ENCODE measurements at regions of chr3 and their contacts with region 1.

Region 1: DNA sequence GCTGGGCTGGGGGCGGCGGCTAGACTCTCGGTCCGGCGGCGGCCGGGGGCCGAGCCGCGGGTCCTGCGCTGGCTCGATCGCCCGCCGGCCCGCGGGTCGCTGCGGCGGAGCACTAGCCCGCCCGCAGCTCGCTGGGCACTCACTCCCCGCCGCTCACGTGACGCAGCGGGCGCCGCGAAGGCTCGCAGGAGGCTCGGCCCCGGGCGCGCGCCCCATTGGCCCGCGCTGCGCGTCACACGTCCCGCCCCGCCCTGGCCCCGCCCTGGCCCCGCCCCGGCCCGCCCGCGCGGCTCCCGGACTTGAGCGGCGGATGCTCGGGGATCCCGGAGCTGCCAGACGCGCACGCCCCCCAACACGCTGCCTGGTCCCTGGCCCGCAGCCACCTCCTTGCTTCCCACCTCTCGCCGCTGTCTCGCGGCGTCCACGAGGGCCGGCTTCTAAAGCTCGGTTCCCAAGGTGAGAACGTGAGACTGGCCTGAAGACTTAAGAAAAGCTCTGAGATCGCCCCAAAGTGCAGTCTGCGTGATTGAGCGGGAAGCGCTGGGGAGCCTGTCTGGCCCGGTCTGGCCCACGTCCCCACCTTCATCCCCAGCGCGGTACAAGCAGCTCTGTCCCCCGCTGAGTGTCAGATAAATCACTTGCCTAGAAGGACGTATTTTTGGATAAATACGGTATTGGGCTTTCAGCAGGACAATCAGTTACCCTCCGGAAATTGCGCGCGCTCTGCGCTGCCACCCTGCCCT is at the start of gene KLF15:
- DNase-seq: peak; percentile 82
- H3K4me3 ChIP-seq: peak within 1 kb of the TSS; percentile 21 to 55 (median 42)
- H3K27ac ChIP-seq: no peak within 1 kb of the TSS
- H3K4me1 ChIP-seq: peaks cover 12% of the 10 kb centered on the region
- H3K27me3 ChIP-seq: peaks cover 14 to 29% of the 10 kb centered on the region in 2 experiments
- CTCF ChIP-seq: no peak
- POLR2A ChIP-seq: no peak
- total RNA-seq, gene KLF15: 1.4 and 3.0 TPM in 2 replicates

Region 2: GRCh38 chr3:126083913-126084767 is 273.3 kb before region 1 on chr3 and contains the start of gene SLC41A3:
- CTCF ChIA-PET with region 1: no interaction called
- POLR2A ChIA-PET with region 1: no interaction called
- dilution Hi-C with region 1: no loop called
- intact Hi-C with region 1: loop called (anchors 5 kb)
- DNase-seq: peak; percentile 74
- H3K4me3 ChIP-seq: peak within 1 kb of the TSS; percentile 65 to 82 (median 71)
- H3K27ac ChIP-seq: peak within 1 kb of the TSS; percentile 41
- H3K4me1 ChIP-seq: peaks cover 5% of the 10 kb centered on the region
- H3K27me3 ChIP-seq: peaks cover 2 to 3% of the 10 kb centered on the region in 2 experiments
- CTCF ChIP-seq: peak; percentile 18 to 58
- POLR2A ChIP-seq: no peak
- total RNA-seq, gene SLC41A3: 47.1 and 52.5 TPM in 2 replicates

Region 3: DNA sequence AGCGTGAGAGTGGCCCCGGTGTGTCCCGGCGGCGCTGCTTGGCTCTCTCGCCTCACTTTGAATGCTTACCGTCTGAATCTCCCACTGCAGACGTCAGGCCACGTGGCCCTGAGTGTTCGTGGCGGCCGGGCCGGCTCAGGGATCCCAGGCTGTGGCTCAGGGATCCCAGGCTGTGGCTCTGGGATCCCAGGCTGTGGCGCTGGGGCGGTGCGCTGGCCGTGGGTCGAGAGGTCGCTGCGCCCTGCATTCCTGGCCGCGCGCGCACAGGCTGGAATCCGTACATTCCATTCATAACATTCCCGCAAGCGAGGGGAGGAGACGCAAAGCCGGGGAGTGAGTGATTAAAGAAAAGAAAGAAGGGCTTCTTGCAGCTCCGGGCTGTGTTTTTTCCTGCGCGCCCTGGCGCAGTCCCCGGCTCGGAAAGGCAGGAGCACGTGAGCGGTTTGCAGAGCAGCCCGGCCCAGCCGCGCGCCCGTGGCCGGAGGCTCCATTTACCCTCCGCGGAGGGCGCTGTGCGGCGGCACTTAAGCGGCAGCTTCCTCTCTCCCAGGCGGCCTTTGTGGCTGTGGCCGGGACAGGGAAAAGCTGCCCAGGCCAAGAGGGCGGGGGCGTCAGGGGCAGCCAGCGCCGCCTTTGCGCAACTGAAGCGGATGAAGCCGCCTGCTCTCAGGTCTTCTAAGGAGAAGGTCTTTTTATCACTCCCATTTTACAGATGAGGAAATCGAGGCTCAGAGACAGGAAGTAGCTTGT is 90.1 kb before region 1 on chr3:
- CTCF ChIA-PET with region 1: no interaction called
- POLR2A ChIA-PET with region 1: no interaction called
- dilution Hi-C with region 1: no loop called
- intact Hi-C with region 1: loop called (anchors 1 kb)
- DNase-seq: peak; percentile 89
- H3K4me3 ChIP-seq: peak overlapping the region in 1 of 3 experiments; percentile 14
- H3K27ac ChIP-seq: peak overlapping the region; percentile 22
- H3K4me1 ChIP-seq: peaks cover 15% of the 10 kb centered on the region
- H3K27me3 ChIP-seq: no peaks in the 10 kb centered on the region
- CTCF ChIP-seq: peak; percentile 6 to 38
- POLR2A ChIP-seq: no peak

Region 4: GRCh38 chr3:126287536-126288241 is 69.8 kb before region 1 on chr3:
- CTCF ChIA-PET with region 1: no interaction called
- POLR2A ChIA-PET with region 1: no interaction called
- dilution Hi-C with region 1: no loop called
- intact Hi-C with region 1: loop called (anchors 1 kb)
- DNase-seq: peak; percentile 46
- H3K4me3 ChIP-seq: peak overlapping the region; percentile 8 to 34 (median 28)
- H3K27ac ChIP-seq: no peak overlapping the region
- H3K4me1 ChIP-seq: peaks cover 26% of the 10 kb centered on the region
- H3K27me3 ChIP-seq: peaks cover 2 to 4% of the 10 kb centered on the region in 2 experiments
- CTCF ChIP-seq: no peak
- POLR2A ChIP-seq: peak; percentile 12

Region 5: DNA sequence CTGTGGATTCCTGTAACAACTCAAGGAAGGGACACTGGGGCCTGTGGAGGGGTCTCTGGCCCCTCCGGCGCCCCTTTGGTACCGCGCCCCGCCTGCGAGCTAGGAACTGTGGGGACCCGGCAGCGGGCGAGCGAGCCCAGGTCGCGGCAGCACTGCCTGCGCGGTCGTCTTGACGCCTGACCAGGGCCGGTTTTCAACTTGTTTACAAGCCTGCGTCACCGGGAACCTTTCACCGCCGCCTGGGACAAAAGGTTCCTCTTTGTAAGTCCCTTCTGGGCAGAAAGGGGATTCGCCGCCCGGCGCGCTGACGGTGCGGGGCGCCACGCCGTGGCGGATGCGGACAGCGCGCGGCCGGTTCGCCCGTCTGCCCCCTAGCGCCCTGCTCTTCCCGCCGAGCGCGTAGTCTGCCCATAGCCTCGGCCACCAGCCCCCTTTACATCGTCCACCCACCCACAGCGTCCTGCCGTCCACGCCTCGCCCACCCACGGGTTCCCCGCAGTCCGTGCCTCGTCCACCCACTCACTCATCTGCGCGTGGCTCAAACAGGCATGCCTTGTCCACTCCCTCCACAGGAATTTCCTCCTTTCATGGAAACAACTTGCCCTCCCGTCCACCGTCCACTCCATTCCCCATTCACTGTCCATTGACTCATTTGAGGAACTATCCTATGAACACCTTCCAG is 31.8 kb after region 1 on chr3:
- CTCF ChIA-PET with region 1: interaction called, 4 read pairs
- POLR2A ChIA-PET with region 1: no interaction called
- dilution Hi-C with region 1: no loop called
- intact Hi-C with region 1: loop called (anchors 1 kb)
- DNase-seq: peak; percentile 84
- H3K4me3 ChIP-seq: peak overlapping the region in 1 of 3 experiments; percentile 16
- H3K27ac ChIP-seq: no peak overlapping the region
- H3K4me1 ChIP-seq: no peaks in the 10 kb centered on the region
- H3K27me3 ChIP-seq: peaks cover 13 to 18% of the 10 kb centered on the region in 2 experiments
- CTCF ChIP-seq: peak; percentile 94 to 96
- POLR2A ChIP-seq: no peak

Region 6: GRCh38 chr3:126442094-126442855 is 84.8 kb after region 1 on chr3:
- CTCF ChIA-PET with region 1: no interaction called
- POLR2A ChIA-PET with region 1: no interaction called
- dilution Hi-C with region 1: no loop called
- intact Hi-C with region 1: no loop called
- DNase-seq: no peak
- H3K4me3 ChIP-seq: no peak overlapping the region
- H3K27ac ChIP-seq: no peak overlapping the region
- H3K4me1 ChIP-seq: no peaks in the 10 kb centered on the region
- H3K27me3 ChIP-seq: no peaks in the 10 kb centered on the region
- CTCF ChIP-seq: no peak
- POLR2A ChIP-seq: no peak

Region 7: DNA sequence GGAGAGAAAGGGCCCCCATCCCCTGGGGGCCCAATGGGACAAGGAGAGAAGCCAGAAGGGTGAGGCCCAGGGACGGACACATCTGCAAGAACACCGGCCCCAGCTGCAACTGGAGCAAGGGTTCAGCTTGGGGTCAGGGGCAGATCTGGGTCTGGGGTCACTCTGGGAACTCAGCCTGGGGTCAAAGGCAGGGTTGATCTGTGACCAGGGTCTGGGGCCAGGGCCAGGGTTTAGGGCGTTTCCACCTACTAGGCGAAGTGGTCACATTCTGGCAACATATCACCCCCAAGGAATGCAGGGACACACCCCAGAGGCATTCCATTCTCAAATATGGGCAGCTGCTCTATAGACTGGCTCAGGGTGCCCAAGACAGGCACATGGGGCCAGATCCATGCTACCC is 151.1 kb after region 1 on chr3:
- CTCF ChIA-PET with region 1: no interaction called
- POLR2A ChIA-PET with region 1: no interaction called
- dilution Hi-C with region 1: no loop called
- intact Hi-C with region 1: no loop called
- DNase-seq: no peak
- H3K4me3 ChIP-seq: no peak overlapping the region
- H3K27ac ChIP-seq: no peak overlapping the region
- H3K4me1 ChIP-seq: no peaks in the 10 kb centered on the region
- H3K27me3 ChIP-seq: no peaks in the 10 kb centered on the region
- CTCF ChIP-seq: no peak
- POLR2A ChIP-seq: no peak